ENCODE measurements at regions of chr9 and their contacts with region 1.

Region 1: DNA sequence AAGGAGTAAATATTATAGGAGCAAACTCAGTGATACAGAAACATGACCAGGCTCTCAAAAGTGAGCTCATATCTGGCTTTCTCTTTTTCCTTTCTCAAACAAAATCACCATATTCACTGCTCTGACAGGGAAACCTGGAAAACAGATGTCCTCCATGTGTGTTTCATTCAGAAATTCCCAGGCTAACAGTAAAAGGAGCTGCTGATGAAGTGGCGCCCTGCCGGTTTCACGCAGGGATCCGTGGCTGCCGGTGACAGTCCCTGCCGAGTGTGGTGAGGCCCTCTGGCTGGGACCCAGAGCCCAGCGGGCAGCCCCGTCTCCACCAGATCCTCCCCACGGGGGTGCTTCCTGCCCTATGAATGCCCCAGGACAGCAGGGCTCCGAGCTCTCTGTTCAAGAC is 208.1 kb downstream of the GNA14 start:
- DNase-seq: no peak
- ATAC-seq: no peak

Region 2: DNA sequence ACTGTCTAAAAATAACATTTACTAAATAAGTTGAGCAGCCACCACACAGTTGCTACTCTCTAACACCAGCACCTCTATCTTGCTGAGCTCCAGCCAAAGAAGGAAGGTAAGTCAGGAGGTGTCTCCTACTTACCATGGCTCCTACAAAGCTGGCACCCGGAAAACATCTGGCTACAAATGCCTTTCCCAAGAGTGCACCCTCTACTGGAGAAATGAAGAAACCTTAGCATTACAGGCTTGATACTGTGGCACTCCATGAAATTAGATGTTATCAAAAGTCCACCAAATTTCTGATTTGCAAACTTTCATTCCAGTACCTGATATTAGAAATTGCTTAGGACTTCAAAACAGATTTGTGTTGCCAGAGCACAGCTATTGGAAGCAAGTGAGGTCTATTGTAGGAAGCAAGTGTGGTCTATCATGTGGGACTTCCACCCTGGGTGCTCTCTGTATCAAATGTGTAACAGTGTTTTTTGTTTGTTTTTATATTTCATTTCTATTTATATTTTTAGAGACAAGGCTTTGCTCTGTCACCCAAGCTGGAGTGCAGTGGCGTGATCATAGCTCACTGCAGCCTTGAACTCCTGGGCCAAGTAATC is 1020.2 kb before region 1 on chr9:
- intact Hi-C with region 1: no loop called
- DNase-seq: peak in 1 of 2 donors; percentile 12
- ATAC-seq: peak; percentile 84

Region 3: GRCh38 chr9:78044189-78044588 is 604.1 kb after region 1 on chr9:
- intact Hi-C with region 1: loop called in 1 of 2 experiments (anchors 10 kb)
- DNase-seq: no peak
- ATAC-seq: peak; percentile 63